ENCODE measurements at regions of chr3 and their contacts with region 1.

Region 1: DNA sequence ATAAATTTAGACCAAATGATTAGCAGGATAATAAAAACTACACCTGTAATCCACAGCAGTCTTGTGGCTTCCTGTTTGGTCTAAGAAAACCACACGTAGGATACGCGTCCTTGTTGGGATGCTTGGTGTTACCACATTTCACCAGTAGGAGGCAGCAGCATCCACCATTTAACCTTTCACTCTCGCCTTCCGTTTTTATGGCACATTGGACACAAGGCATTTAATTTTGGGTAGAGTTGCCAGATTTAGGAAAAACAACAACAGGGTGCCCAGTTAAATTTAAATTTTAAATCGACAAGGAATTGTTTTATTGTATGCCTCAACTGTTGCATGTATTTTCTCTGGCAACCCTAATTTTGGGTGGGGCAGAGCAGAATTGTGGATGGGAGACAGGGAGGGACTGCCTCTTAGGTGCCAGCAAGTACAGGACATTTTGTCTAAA is 6.3 kb downstream of the LRRC31 start:
- DNase-seq: peak; percentile 87
- ATAC-seq: peak; percentile 55
- H3K4me3 ChIP-seq: no peak overlapping the region
- H3K4me3 Mint-ChIP-seq: no peak overlapping the region
- H3K27ac ChIP-seq: no peak overlapping the region
- H3K27ac Mint-ChIP-seq: peak overlapping the region; percentile 44
- H3K4me1 ChIP-seq: peaks cover 27 to 32% of the 10 kb centered on the region in 2 donors
- H3K4me1 Mint-ChIP-seq: peaks cover 23% of the 10 kb centered on the region
- H3K27me3 ChIP-seq: no peaks in the 10 kb centered on the region
- H3K27me3 Mint-ChIP-seq: no peaks in the 10 kb centered on the region
- CTCF ChIP-seq: peak; percentile 97

Region 2: DNA sequence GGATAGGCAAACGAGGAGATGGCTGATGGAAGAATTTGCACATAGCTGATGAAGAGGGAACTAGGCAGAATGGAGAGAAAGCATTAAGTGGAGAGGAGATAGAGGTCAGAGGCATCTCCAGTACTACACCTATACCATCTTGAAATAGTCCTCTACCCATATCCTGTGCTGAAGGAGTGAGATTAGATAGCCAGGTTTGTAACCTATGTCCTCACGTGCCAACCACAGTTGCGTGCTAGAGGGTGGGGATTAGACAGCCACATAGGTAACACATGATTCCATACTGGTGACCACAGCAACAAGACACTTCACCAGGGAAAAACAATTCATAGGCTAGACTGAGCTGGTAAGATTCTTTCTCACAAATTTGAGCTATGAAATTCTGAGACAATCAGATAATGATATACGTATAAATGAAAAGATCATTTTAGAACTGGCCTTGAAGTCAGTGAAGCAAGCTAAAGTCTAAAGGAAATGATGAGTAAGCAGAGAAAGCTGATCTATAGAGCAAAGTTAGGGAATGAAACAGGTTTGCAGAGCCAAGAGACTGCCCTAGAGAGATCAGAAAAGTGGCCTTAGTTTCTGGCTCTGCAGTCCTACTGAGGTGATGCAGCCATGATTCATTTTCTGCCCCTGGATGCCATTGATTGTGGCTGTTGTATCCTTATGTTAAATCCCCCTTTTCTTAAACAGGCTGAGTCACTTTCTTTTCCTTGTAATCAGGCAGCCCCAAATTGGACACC is 72.6 kb before region 1 on chr3:
- CTCF ChIA-PET with region 1: no interaction called
- POLR2A ChIA-PET with region 1: no interaction called
- intact Hi-C with region 1: no loop called
- DNase-seq: no peak
- ATAC-seq: no peak
- H3K4me3 ChIP-seq: no peak overlapping the region
- H3K4me3 Mint-ChIP-seq: no peak overlapping the region
- H3K27ac ChIP-seq: no peak overlapping the region
- H3K27ac Mint-ChIP-seq: no peak overlapping the region
- H3K4me1 ChIP-seq: no peaks in the 10 kb centered on the region
- H3K4me1 Mint-ChIP-seq: peaks cover 2% of the 10 kb centered on the region
- H3K27me3 ChIP-seq: no peaks in the 10 kb centered on the region
- H3K27me3 Mint-ChIP-seq: no peaks in the 10 kb centered on the region
- CTCF ChIP-seq: no peak

Region 3: DNA sequence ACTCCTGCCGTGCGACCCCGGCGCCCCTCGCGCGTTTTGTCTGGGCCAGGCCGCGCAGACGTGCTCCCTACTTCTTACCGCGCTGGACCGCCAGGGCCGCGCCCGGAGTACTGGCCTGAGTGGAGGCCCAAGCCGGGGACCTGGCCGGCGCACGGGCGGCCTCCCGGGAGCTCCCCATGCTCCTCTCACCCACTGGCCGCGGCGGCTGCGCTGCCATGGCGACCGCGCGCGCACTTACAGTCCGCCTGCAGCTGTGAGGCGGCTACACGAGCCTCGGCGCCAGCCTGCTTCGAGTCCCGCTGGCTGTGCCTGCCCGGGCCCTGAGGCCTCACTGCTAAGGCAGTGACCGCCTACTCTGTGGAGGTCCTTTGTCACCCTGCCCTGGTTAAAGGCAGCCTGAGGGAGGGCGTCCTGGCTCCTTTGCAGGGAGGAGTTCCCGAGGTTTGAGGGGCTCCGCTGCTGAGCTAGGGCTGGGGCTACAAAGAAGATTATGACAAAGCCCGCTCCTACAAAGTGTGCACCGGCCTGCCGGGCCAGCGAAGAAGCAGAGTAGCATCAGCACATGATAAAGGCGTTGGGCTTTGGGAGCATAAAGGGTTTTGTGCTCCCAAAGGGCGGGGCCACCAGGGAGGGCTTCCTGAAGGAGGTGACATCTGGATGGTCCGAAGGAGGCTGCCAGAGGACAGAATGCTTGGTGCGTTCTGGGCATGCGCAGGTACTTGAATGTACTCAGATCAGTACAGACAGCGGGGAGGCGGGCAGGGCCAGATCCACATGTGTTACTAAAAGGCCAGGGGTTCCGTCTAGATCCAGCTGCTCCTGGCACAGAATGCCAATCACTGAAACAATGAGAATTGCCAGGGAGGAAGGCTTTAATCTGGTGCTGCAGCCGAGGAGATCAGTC is 50.9 kb before region 1 on chr3 and contains the starts of genes LRRC34 and LRRIQ4:
- CTCF ChIA-PET with region 1: interaction called, 12 read pairs
- POLR2A ChIA-PET with region 1: interaction called, 7 read pairs
- intact Hi-C with region 1: loop called (anchors 1 kb)
- DNase-seq: peak; percentile 80
- ATAC-seq: peak; percentile 60
- H3K4me3 ChIP-seq: peak within 1 kb of the TSS; percentile 66 to 79 (median 69)
- H3K4me3 Mint-ChIP-seq: peak within 1 kb of the TSS; percentile 87
- H3K27ac ChIP-seq: peak within 1 kb of the TSS; percentile 46 to 77
- H3K27ac Mint-ChIP-seq: peak within 1 kb of the TSS; percentile 93
- H3K4me1 ChIP-seq: peaks cover 19 to 28% of the 10 kb centered on the region in 2 donors
- H3K4me1 Mint-ChIP-seq: peaks cover 34% of the 10 kb centered on the region
- H3K27me3 ChIP-seq: no peaks in the 10 kb centered on the region
- H3K27me3 Mint-ChIP-seq: no peaks in the 10 kb centered on the region
- CTCF ChIP-seq: no peak
- total RNA-seq, gene LRRC34: 7.1 and 11.8 TPM in 2 replicates
- total RNA-seq, gene LRRIQ4: 0.53 and 0.71 TPM in 2 replicates

Region 4: DNA sequence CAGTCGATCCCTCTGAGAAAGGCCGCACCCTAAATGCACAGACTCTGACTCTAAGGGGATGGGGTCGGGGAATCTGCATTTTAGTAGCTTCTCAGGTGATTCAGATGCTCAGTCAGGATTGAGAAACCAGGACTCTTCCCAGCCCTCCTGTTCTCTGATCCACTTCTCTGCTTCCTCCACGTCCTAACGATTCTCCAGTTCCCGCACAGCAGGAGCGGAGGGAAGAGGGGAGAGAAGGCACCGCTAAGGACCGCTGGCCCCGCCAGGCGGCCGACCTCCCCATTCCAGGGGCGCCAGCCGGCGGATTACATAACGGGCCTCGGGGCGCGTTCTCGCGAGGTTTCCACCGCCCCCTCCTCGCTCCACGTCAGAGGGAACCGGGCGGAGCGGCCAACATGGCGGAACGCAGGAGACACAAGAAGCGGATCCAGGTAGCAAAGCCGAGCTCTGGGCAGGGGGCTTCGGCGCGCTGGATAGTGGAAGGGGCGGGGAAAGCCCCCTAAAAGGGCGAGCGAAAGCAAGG is 103.0 kb after region 1 on chr3 and contains the start of gene SEC62:
- CTCF ChIA-PET with region 1: interaction called, 70 read pairs
- POLR2A ChIA-PET with region 1: interaction called, 3 read pairs
- intact Hi-C with region 1: loop called (anchors 1 kb)
- DNase-seq: peak; percentile 97
- ATAC-seq: peak; percentile 88
- H3K4me3 ChIP-seq: peak within 1 kb of the TSS; percentile 59 to 88 (median 85)
- H3K4me3 Mint-ChIP-seq: peak within 1 kb of the TSS; percentile 90
- H3K27ac ChIP-seq: peak within 1 kb of the TSS; percentile 98 to 99
- H3K27ac Mint-ChIP-seq: peak within 1 kb of the TSS; percentile 95
- H3K4me1 ChIP-seq: peaks cover 45 to 74% of the 10 kb centered on the region in 2 donors
- H3K4me1 Mint-ChIP-seq: peaks cover 77% of the 10 kb centered on the region
- H3K27me3 ChIP-seq: no peaks in the 10 kb centered on the region
- H3K27me3 Mint-ChIP-seq: no peaks in the 10 kb centered on the region
- CTCF ChIP-seq: peak; percentile 57
- total RNA-seq, gene SEC62: 166 and 176 TPM in 2 replicates

Region 5: GRCh38 chr3:170021083-170021482 is 157.6 kb after region 1 on chr3:
- CTCF ChIA-PET with region 1: interaction called, 39 read pairs
- POLR2A ChIA-PET with region 1: interaction called, 5 read pairs
- intact Hi-C with region 1: no loop called
- DNase-seq: peak; percentile 39
- ATAC-seq: no peak
- H3K4me3 ChIP-seq: no peak overlapping the region
- H3K4me3 Mint-ChIP-seq: no peak overlapping the region
- H3K27ac ChIP-seq: no peak overlapping the region
- H3K27ac Mint-ChIP-seq: no peak overlapping the region
- H3K4me1 ChIP-seq: no peaks in the 10 kb centered on the region
- H3K4me1 Mint-ChIP-seq: peaks cover 3% of the 10 kb centered on the region
- H3K27me3 ChIP-seq: no peaks in the 10 kb centered on the region
- H3K27me3 Mint-ChIP-seq: no peaks in the 10 kb centered on the region
- CTCF ChIP-seq: peak; percentile 27

Region 6: DNA sequence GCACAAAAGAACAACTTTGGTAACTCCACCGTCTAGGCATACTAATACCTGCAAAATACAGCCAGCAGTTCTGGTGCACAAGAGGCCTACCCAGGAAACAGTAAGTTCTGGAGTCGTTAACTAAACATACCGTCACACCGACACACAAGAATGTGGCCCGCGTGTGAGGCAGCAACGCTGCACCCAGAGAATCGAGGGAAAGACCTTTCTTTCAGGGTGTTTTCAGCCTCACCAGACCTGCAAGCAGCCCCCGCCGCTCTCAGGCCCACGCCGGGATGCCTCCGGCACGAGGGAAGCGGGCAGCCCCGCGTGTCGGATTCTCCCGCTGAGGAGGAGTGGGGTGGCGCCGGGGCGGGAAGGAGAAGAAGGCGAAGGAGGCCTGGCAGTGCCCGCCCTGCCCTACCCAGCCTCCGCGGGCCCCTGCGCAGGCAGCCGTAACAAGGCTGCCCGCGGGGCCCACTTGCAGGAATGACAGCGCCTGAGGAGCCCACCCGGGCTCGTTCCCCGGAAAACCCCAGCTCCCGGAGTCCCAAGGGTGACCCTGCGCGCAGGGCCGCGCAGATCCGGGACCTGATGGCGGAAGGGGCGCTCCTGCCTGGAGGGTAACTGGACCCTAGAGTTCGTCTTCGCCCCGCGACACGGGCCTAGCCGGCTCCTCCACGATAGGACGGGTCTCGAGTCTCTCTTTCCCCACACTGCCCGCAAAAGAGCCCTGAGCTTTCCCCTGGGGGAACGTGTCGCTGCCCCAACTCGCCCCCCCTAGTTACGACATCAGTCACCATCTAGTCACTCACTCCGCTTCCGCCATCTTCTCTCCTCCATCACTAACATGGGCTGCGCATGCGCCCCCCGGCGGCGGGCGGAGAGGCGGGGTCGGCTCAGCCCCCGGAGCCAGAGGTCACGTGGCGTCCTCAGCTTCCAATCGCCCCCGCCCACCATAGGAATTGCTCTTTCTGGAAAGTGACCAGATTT is 317.7 kb after region 1 on chr3 and contains the start of gene PHC3:
- CTCF ChIA-PET with region 1: interaction called, 3 read pairs
- POLR2A ChIA-PET with region 1: no interaction called
- intact Hi-C with region 1: loop called (anchors 10 kb)
- DNase-seq: peak; percentile 95
- ATAC-seq: peak; percentile 82
- H3K4me3 ChIP-seq: peak within 1 kb of the TSS; percentile 61 to 98 (median 95)
- H3K4me3 Mint-ChIP-seq: peak within 1 kb of the TSS; percentile 98
- H3K27ac ChIP-seq: peak within 1 kb of the TSS; percentile 96 to 98
- H3K27ac Mint-ChIP-seq: peak within 1 kb of the TSS; percentile 100
- H3K4me1 ChIP-seq: peaks cover 20 to 25% of the 10 kb centered on the region in 2 donors
- H3K4me1 Mint-ChIP-seq: peaks cover 28% of the 10 kb centered on the region
- H3K27me3 ChIP-seq: no peaks in the 10 kb centered on the region
- H3K27me3 Mint-ChIP-seq: no peaks in the 10 kb centered on the region
- CTCF ChIP-seq: no peak
- total RNA-seq, gene PHC3: 159 and 165 TPM in 2 replicates

Region 7: DNA sequence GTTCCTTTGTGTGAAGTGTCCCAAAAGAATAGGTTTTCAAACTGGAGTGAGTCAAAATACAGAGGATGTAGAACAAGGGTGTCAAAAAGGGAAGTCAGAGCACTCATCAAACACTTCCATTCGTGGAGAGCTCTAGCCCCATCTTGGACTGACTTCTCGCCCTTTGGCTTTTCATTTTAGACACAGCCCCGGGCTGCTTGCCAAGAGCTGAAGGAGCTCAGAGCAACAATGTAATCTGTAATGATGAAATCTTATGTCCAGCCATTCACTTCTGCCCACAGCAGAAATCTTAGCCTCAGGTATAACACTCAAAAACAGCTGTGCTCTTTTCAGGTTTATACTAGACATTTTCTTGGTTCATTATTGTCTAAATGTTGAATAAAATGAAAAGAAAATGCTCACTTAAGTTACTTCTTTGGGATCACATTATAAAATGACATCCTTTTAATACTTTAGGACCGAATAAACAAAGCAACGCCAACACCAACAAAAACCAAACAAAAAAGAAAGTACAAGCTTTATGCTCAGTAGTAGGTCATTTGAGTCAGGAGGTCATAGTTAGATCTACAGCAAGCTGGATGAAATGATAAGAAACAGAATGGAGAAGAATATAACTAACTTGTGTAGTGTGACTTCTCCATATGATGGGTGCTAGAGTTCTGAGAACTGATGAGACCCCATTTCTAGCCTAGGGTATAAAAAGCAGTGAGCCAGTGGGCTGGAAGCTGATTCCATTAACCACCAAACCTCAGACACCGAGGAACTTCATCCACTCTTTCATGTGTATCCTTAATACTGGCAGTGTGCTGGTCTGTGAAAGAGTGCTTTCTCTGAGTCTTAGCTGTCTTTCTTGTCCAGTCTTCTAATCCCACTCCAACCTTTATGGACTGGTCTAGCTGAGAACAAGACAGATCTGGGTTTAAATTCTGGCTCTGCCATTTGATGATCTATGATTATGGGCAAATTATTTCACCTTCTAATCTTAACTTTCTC is 854.2 kb after region 1 on chr3:
- CTCF ChIA-PET with region 1: no interaction called
- POLR2A ChIA-PET with region 1: no interaction called
- intact Hi-C with region 1: no loop called
- DNase-seq: no peak
- ATAC-seq: no peak
- H3K4me3 ChIP-seq: no peak overlapping the region
- H3K4me3 Mint-ChIP-seq: no peak overlapping the region
- H3K27ac ChIP-seq: no peak overlapping the region
- H3K27ac Mint-ChIP-seq: no peak overlapping the region
- H3K4me1 ChIP-seq: no peaks in the 10 kb centered on the region
- H3K4me1 Mint-ChIP-seq: no peaks in the 10 kb centered on the region
- H3K27me3 ChIP-seq: peaks cover 0 to 9% (median 3%) of the 10 kb centered on the region in 4 experiments
- H3K27me3 Mint-ChIP-seq: peaks cover 53% of the 10 kb centered on the region
- CTCF ChIP-seq: no peak